ENCODE measurements at regions of chr7 and their contacts with region 1.

Region 1: DNA sequence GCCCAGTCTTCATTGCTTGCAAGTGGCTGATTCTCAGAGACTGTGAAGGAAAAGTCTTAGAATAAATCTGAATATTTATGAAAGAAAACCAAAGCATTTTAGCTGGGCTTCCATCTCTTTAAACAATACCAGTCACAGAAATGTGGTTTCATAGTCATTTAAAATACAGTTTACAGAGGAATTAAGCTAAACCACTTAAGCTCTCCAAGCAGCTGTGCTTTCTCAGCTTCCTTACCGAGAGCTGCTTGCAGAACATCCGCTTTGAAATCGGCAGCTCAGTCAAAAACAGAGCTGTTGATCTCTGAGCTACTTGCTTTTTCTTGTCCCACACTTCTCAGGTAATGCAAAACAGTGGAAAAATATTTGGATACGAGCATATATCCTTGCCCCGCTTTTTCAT is 134.5 kb downstream of the DYNC1I1 start:
- DNase-seq: peak; percentile 83
- H3K4me3 ChIP-seq: no peak overlapping the region
- H3K27ac ChIP-seq: peak overlapping the region; percentile 29
- H3K4me1 ChIP-seq: peaks cover 30% of the 10 kb centered on the region
- H3K27me3 ChIP-seq: no peaks in the 10 kb centered on the region
- CTCF ChIP-seq: no peak

Region 2: GRCh38 chr7:95723592-95724180 is 183.2 kb before region 1 on chr7:
- CTCF ChIA-PET with region 1: interaction called, 3 read pairs
- POLR2A ChIA-PET with region 1: no interaction called
- intact Hi-C with region 1: loop called (anchors 5 kb)
- DNase-seq: peak; percentile 81
- H3K4me3 ChIP-seq: no peak overlapping the region
- H3K27ac ChIP-seq: no peak overlapping the region
- H3K4me1 ChIP-seq: peaks cover 10% of the 10 kb centered on the region
- H3K27me3 ChIP-seq: no peaks in the 10 kb centered on the region
- CTCF ChIP-seq: peak; percentile 70

Region 3: GRCh38 chr7:95886501-95887090 is 20.3 kb before region 1 on chr7:
- CTCF ChIA-PET with region 1: no interaction called
- POLR2A ChIA-PET with region 1: interaction called, 19 read pairs
- intact Hi-C with region 1: no loop called
- DNase-seq: peak; percentile 43
- H3K4me3 ChIP-seq: no peak overlapping the region
- H3K27ac ChIP-seq: no peak overlapping the region
- H3K4me1 ChIP-seq: peaks cover 21% of the 10 kb centered on the region
- H3K27me3 ChIP-seq: no peaks in the 10 kb centered on the region
- CTCF ChIP-seq: no peak